Transverse colon (tissue), 4 donors: ENCODE measurements at regions of chr3 and their contacts with region 1.

Region 1: DNA sequence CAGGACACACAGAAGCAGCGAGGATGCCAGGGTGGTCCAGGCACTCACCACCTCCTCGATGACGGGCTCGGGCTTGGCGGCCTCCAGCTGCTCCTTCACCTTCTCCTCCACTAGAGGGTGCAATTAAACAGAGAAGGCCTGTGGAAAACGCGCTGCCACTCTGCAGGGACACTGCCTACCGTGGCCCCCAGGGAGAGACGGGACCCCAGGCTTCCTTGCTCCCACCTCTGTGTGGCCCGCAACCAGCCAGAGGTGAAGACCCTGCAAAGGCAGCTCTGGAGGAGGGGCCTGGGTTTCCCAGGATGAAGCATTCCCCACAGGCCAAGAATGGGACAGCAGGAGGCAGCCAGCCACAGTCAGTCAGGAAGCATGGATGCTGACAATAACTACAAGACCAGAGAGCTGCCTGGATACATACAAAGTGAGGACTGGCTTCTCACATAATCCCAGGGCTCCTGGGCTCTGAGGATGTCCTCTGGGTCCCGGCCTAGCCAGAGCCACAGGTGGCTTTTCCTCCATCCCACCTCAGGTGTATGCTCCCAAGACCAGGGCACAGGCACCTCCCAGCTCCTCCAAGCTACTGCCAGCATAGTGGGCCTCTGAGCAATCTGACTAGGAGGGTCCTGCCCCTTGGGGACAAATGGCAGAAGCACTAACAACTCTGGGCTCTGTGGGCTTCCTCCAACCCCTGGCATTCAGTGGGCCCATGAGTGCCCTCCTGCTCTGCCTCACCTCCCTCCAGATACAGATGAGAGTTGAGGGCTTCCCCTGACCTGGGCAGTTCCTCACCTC is 46.2 kb downstream of the PTH1R start:
- DNase-seq: peak; percentile 43
- H3K4me3 ChIP-seq: no peak overlapping the region
- H3K27ac ChIP-seq: no peak overlapping the region
- H3K4me1 ChIP-seq: peaks cover 20 to 29% (median 23%) of the 10 kb centered on the region in 4 donors
- H3K27me3 ChIP-seq: no peaks in the 10 kb centered on the region
- CTCF ChIP-seq: peak; percentile 61 to 93 (median 77)
- EP300 ChIP-seq: no peak
- POLR2A ChIP-seq: no peak

Region 2: DNA sequence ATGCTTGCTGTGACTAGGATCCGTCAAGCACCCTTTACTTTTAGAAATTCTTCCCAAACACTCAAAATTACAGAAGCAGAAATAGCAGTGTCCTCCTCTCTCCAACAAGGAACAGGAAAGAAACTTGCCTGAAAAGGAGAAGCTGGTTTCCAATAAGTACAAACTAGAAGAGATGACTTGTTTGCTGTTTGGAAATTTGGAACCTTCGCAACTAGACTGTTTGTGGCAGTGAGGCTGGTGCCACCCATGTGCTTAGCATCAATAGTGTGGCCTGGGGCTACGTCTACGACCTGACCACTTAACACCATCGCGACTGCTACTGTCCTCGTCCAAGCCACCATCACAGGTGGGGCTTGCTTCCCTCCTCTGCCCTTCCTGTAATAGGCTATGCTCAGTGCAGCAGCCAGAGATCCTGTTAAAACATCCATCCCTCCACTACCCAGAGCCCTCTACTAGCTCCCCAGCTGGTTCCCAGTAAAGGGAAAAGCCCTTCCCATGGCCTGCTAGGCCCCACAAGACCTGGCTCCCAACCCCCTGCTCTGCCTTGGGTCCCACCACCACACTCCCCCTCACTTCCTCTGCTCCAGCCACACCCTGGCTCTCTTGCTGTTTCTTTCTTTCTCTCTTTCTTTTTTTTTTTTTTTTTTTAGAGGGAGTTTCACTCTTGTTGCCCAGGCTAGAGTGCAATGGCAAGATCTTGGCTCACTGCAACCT is 622.5 kb before region 1 on chr3:
- in situ Hi-C with region 1: no loop called
- intact Hi-C with region 1: no loop called
- DNase-seq: no peak
- H3K4me3 ChIP-seq: no peak overlapping the region
- H3K27ac ChIP-seq: peak overlapping the region; percentile 25 to 51 (median 38)
- H3K4me1 ChIP-seq: peaks cover 0 to 8% (median 0%) of the 10 kb centered on the region in 4 donors
- H3K27me3 ChIP-seq: no peaks in the 10 kb centered on the region
- CTCF ChIP-seq: no peak
- EP300 ChIP-seq: no peak
- POLR2A ChIP-seq: no peak

Region 3: GRCh38 chr3:46998121-46998851 is 74.5 kb after region 1 on chr3:
- in situ Hi-C with region 1: loop called in 1 of 4 experiments (anchors 10 kb)
- intact Hi-C with region 1: loop called (anchors 5 kb)
- DNase-seq: peak; percentile 84
- H3K4me3 ChIP-seq: no peak overlapping the region
- H3K27ac ChIP-seq: no peak overlapping the region
- H3K4me1 ChIP-seq: peaks cover 0 to 5% (median 0%) of the 10 kb centered on the region in 4 donors
- H3K27me3 ChIP-seq: no peaks in the 10 kb centered on the region
- CTCF ChIP-seq: peak; percentile 76 to 94 (median 84)
- EP300 ChIP-seq: no peak
- POLR2A ChIP-seq: no peak

Region 4: DNA sequence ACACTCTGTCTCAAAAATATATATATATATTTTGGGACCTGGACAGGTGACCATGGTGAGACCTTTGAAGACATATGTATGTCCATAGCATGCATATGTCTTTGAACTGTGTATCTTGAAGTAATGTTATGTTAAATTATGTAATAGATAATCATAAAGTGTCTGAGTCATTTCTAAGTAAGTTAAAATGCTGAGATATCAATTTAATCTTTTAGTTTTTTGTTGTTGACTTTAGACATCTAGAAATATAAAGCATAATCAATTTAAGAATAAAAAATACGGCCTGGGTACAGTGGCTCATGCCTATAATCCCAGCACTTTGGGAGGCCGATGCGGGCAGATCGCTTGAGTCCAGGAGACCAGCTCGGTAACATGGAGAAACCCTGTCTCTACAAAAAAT is 252.8 kb after region 1 on chr3:
- in situ Hi-C with region 1: no loop called
- intact Hi-C with region 1: no loop called
- DNase-seq: no peak
- H3K4me3 ChIP-seq: no peak overlapping the region
- H3K27ac ChIP-seq: no peak overlapping the region
- H3K4me1 ChIP-seq: no peaks in the 10 kb centered on the region
- H3K27me3 ChIP-seq: no peaks in the 10 kb centered on the region
- CTCF ChIP-seq: no peak
- EP300 ChIP-seq: no peak
- POLR2A ChIP-seq: no peak